CD4-positive, alpha-beta T cell (primary cell): ENCODE measurements at regions of chr12 and their contacts with region 1.

Region 1: DNA sequence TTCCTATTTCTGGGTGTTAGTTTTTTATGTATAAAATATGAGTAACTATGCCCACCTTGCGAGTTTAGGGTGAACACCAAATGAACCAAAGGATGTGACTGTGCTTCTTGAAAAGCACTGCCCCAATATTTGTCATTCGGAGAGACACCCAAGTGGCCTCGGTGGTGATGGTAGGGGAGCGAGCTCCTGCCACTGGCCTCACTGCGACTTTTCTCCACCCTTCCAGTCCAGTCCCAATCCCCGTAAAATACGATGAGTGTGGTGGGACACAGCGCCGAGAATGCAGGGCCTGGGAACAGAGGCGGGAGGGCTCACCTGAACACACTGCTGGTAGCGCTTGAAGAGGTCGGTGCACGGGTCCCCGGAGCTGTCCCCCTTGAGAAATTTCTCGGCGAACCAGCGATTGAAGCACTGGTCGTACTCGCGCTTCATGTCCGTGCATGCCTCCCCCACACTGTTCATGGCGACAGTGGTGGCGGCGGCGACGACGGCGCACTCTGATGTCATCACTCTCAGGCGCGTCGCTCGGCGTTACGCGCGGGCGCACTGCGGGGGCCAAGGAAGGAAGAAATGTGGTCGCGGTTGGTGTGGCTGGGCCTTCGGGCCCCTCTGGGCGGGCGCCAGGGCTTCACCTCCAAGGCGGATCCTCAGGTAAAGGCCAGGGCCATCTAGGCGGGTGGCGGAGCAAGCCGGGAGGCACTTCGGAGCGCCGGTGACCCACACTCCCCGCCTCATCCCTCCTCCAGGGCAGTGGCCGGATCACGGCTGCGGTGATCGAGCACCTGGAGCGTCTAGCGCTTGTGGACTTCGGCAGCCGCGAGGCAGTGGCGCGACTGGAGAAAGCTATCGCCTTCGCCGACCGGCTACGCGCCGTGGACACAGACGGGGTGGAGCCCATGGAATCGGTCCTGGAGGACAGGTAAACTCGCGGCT is at the starts of genes GATC and TRIAP1:
- DNase-seq: peak; percentile 68 to 94 (median 83)
- ATAC-seq: peak; percentile 95
- H3K4me3 ChIP-seq: peak within 1 kb of the TSS; percentile 100
- H3K4me3 Mint-ChIP-seq: peak within 1 kb of the TSS; percentile 100
- H3K27ac ChIP-seq: peak within 1 kb of the TSS; percentile 80 to 92
- H3K27ac Mint-ChIP-seq: peak within 1 kb of the TSS; percentile 98
- H3K4me1 ChIP-seq: peaks cover 37% of the 10 kb centered on the region
- H3K4me1 Mint-ChIP-seq: peaks cover 39% of the 10 kb centered on the region
- H3K27me3 ChIP-seq: no peaks in the 10 kb centered on the region
- H3K27me3 Mint-ChIP-seq: no peaks in the 10 kb centered on the region
- CTCF ChIP-seq: no peak
- total RNA-seq, gene GATC: 18.6 to 19.4 TPM
- total RNA-seq, gene TRIAP1: 33.0 to 34.3 TPM

Region 2: GRCh38 chr12:120116792-120117651 is 329.2 kb before region 1 on chr12:
- CTCF ChIA-PET with region 1: no interaction called
- POLR2A ChIA-PET with region 1: interaction called, 3 read pairs
- intact Hi-C with region 1: loop called in 1 of 2 experiments (anchors 5 kb)
- DNase-seq: peak; percentile 96 to 99 (median 98)
- ATAC-seq: peak; percentile 75
- H3K4me3 ChIP-seq: peak overlapping the region; percentile 86
- H3K4me3 Mint-ChIP-seq: peak overlapping the region; percentile 91
- H3K27ac ChIP-seq: peak overlapping the region; percentile 94 to 95
- H3K27ac Mint-ChIP-seq: peak overlapping the region; percentile 84
- H3K4me1 ChIP-seq: peaks cover 61% of the 10 kb centered on the region
- H3K4me1 Mint-ChIP-seq: peaks cover 76% of the 10 kb centered on the region
- H3K27me3 ChIP-seq: no peaks in the 10 kb centered on the region
- H3K27me3 Mint-ChIP-seq: no peaks in the 10 kb centered on the region
- CTCF ChIP-seq: no peak

Region 3: DNA sequence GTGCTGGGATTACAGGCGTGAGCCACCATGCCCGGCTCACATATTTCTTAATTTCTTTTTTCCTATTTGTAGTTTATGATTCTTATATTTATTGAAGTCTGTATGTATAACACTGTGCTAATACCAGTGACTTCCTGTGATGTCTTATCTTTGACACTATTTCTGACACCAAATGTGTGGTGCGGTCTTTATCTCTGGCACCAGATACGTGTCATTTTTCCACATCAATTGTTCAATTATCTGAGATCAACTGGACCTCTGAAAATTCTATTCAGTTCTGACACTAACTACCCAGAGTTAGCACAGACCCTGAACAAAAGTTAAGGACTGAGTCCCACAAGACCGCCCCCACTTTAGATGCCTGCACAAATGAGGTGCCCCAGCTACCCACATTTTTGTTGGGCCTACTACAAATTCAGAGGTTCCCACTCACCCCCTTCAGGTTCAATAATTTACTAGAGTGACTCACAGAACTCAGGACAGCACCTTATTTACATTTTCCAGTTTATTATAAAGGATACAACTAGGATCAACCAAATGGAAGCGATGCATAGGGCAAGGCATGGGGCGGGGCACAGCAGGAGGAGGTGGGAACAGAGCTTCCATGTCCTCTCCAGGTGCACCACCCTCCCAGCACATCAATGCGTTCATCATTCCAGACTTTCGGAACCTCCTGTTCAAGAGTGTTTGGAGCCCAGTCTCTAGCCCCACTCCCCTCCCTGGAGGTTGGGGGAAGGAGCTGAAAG is 35.0 kb after region 1 on chr12:
- CTCF ChIA-PET with region 1: no interaction called
- POLR2A ChIA-PET with region 1: no interaction called
- intact Hi-C with region 1: no loop called
- DNase-seq: peak in 3 of 14 experiments; percentile 28 to 67 (median 32)
- ATAC-seq: no peak
- H3K4me3 ChIP-seq: no peak overlapping the region
- H3K4me3 Mint-ChIP-seq: no peak overlapping the region
- H3K27ac ChIP-seq: no peak overlapping the region
- H3K27ac Mint-ChIP-seq: no peak overlapping the region
- H3K4me1 ChIP-seq: peaks cover 26% of the 10 kb centered on the region
- H3K4me1 Mint-ChIP-seq: peaks cover 5% of the 10 kb centered on the region
- H3K27me3 ChIP-seq: no peaks in the 10 kb centered on the region
- H3K27me3 Mint-ChIP-seq: no peaks in the 10 kb centered on the region
- CTCF ChIP-seq: no peak

Region 4: GRCh38 chr12:120508537-120508936 is 62.4 kb after region 1 on chr12:
- CTCF ChIA-PET with region 1: no interaction called
- POLR2A ChIA-PET with region 1: no interaction called
- intact Hi-C with region 1: no loop called
- DNase-seq: no peak
- ATAC-seq: no peak
- H3K4me3 ChIP-seq: no peak overlapping the region
- H3K4me3 Mint-ChIP-seq: no peak overlapping the region
- H3K27ac ChIP-seq: no peak overlapping the region
- H3K27ac Mint-ChIP-seq: no peak overlapping the region
- H3K4me1 ChIP-seq: no peaks in the 10 kb centered on the region
- H3K4me1 Mint-ChIP-seq: no peaks in the 10 kb centered on the region
- H3K27me3 ChIP-seq: no peaks in the 10 kb centered on the region
- H3K27me3 Mint-ChIP-seq: no peaks in the 10 kb centered on the region
- CTCF ChIP-seq: no peak

Region 5: GRCh38 chr12:120528861-120529525 is 82.8 kb after region 1 on chr12 and contains the start of gene COQ5:
- CTCF ChIA-PET with region 1: no interaction called
- POLR2A ChIA-PET with region 1: no interaction called
- intact Hi-C with region 1: loop called in 1 of 2 experiments (anchors 1 kb)
- DNase-seq: peak; percentile 70 to 89 (median 79)
- ATAC-seq: peak; percentile 97
- H3K4me3 ChIP-seq: peak within 1 kb of the TSS; percentile 92
- H3K4me3 Mint-ChIP-seq: peak within 1 kb of the TSS; percentile 100
- H3K27ac ChIP-seq: peak within 1 kb of the TSS; percentile 69 to 73
- H3K27ac Mint-ChIP-seq: peak within 1 kb of the TSS; percentile 95
- H3K4me1 ChIP-seq: peaks cover 27% of the 10 kb centered on the region
- H3K4me1 Mint-ChIP-seq: peaks cover 32% of the 10 kb centered on the region
- H3K27me3 ChIP-seq: no peaks in the 10 kb centered on the region
- H3K27me3 Mint-ChIP-seq: no peaks in the 10 kb centered on the region
- CTCF ChIP-seq: no peak
- total RNA-seq, gene COQ5: 6.9 to 7.1 TPM

Region 6: DNA sequence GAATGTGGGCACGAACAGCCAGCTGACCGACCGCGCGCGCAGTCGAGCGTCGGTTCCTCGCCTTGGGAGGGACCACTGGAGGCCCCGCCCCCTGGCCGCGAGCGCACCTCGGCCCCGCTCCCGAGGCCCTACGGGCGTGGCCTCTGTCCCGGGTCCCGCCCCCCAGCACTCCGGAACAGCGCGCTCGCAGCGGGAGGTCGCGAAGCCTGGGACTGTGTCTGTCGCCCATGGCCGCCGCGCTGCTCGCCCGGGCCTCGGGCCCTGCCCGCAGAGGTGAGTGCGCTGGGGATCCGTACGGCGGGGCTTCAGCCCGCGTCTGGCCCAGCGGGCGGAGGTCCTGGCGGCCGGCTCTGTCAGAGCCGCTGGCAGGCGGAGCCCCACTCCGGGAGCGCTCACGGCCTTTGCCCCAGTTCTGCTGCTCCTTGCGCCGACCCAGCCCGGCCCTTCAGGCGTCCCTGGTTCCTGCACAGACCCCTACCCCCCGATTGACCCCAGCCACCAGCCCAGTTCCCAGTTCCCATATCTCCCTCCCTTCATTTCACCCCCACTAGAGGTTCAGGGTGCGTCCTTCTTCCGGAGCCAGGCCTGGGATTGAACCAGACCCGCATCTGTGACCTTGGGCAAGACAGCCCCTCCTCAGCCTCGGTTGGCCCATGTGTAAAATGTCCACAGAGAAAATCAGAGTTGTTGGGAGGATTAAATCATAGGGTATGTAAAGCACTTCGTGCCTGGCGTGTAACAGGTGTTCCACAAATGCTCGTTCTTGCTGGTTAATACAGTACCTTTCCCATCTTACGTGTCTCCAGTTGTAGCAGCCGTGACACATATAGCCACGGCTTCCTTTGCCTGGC is 279.7 kb after region 1 on chr12 and contains the start of gene ACADS:
- CTCF ChIA-PET with region 1: no interaction called
- POLR2A ChIA-PET with region 1: no interaction called
- intact Hi-C with region 1: loop called in 1 of 2 experiments (anchors 5 kb)
- DNase-seq: peak; percentile 72 to 95 (median 88)
- ATAC-seq: peak; percentile 99
- H3K4me3 ChIP-seq: peak within 1 kb of the TSS; percentile 75
- H3K4me3 Mint-ChIP-seq: peak within 1 kb of the TSS; percentile 97
- H3K27ac ChIP-seq: peak within 1 kb of the TSS in 1 of 2 donors; percentile 18
- H3K27ac Mint-ChIP-seq: peak within 1 kb of the TSS; percentile 72
- H3K4me1 ChIP-seq: peaks cover 28% of the 10 kb centered on the region
- H3K4me1 Mint-ChIP-seq: peaks cover 21% of the 10 kb centered on the region
- H3K27me3 ChIP-seq: no peaks in the 10 kb centered on the region
- H3K27me3 Mint-ChIP-seq: no peaks in the 10 kb centered on the region
- CTCF ChIP-seq: no peak
- total RNA-seq, gene ACADS: 8.9 to 9.2 TPM

Region 7: DNA sequence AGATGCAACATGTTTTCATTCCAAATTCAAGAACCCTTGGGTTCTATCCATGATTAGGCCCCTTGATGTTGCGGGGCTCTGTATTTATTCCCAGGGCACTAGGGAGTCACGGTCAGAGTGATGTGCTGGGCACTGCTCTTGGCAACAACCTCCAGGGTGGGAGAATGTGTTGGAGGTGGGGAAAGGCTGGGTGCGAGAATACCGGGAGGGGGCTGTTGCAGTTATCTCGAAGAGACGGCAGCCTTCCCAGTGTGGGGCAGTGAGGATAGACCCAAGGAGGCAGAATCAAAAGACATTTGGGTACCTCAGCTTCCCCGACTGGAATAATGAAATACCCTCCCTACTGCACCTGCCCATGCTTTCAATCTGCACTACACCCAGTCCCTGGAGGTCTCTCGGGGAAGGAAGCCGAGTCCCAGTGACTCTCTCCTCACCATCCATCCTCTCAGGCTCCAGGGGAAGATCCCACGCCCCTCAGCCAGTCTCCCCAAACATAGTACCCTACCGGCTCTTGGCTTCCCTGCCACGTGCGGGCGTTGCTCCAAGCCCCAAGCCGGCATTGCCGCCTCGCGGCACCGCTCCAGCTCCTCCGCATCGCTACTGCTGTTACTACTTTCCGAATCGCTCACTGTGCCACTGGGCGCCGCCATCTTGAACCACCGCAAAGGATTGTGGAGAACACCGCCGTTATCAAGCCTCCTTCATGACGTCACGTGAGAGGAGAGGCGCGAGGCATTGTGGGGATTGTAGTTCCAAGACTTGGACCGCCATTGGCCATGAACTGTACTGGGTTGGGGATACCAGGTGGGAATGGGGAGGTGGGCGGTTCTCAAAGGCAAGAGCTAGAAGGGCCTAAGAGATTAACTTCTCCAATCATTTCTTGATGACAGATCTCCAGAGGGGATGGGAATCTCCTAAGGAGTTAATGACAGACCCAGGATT is 569.9 kb after region 1 on chr12 and contains the start of gene C12orf43:
- CTCF ChIA-PET with region 1: no interaction called
- POLR2A ChIA-PET with region 1: no interaction called
- intact Hi-C with region 1: loop called in 1 of 2 experiments (anchors 10 kb)
- DNase-seq: peak; percentile 84 to 95 (median 90)
- ATAC-seq: peak; percentile 99
- H3K4me3 ChIP-seq: peak within 1 kb of the TSS; percentile 74
- H3K4me3 Mint-ChIP-seq: peak within 1 kb of the TSS; percentile 90
- H3K27ac ChIP-seq: peak within 1 kb of the TSS; percentile 73 to 74
- H3K27ac Mint-ChIP-seq: peak within 1 kb of the TSS; percentile 82
- H3K4me1 ChIP-seq: peaks cover 11% of the 10 kb centered on the region
- H3K4me1 Mint-ChIP-seq: peaks cover 16% of the 10 kb centered on the region
- H3K27me3 ChIP-seq: no peaks in the 10 kb centered on the region
- H3K27me3 Mint-ChIP-seq: no peaks in the 10 kb centered on the region
- CTCF ChIP-seq: no peak
- total RNA-seq, gene C12orf43: 14.4 to 15.8 TPM

Region 8: GRCh38 chr12:122123051-122123760 is 1677.0 kb after region 1 on chr12:
- CTCF ChIA-PET with region 1: no interaction called
- POLR2A ChIA-PET with region 1: no interaction called
- intact Hi-C with region 1: no loop called
- DNase-seq: peak; percentile 53 to 84 (median 66)
- ATAC-seq: peak; percentile 79
- H3K4me3 ChIP-seq: no peak overlapping the region
- H3K4me3 Mint-ChIP-seq: peak overlapping the region; percentile 68
- H3K27ac ChIP-seq: no peak overlapping the region
- H3K27ac Mint-ChIP-seq: peak overlapping the region; percentile 69
- H3K4me1 ChIP-seq: peaks cover 19% of the 10 kb centered on the region
- H3K4me1 Mint-ChIP-seq: peaks cover 39% of the 10 kb centered on the region
- H3K27me3 ChIP-seq: no peaks in the 10 kb centered on the region
- H3K27me3 Mint-ChIP-seq: no peaks in the 10 kb centered on the region
- CTCF ChIP-seq: peak; percentile 95